Breast epithelium (tissue), 4 donors: ENCODE measurements at regions of chr5 and their contacts with region 1.

Region 1: DNA sequence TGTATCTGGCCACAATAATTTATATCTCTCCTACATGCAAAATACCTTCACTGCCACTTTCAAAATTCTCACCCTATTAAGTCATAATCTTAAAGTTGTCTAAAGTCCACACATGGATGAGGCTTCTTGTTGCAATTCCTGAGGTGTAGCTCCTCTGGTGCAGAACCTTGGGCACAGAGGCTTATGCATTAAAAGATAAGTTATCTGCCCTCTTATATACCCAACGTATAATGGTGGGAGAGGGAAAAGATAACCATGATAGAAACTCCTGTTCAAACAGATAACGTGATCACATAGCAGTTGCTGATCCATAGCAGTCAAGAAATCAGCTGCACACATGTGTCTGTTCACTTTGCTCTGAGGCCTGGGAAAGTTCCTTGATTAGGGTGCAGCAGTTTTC is 1767.0 kb downstream of the MAT2B start:
- DNase-seq: no peak
- H3K4me3 ChIP-seq: no peak overlapping the region
- H3K27ac ChIP-seq: no peak overlapping the region
- H3K4me1 ChIP-seq: no peaks in the 10 kb centered on the region
- H3K27me3 ChIP-seq: no peaks in the 10 kb centered on the region
- CTCF ChIP-seq: no peak
- POLR2A ChIP-seq: no peak

Region 2: DNA sequence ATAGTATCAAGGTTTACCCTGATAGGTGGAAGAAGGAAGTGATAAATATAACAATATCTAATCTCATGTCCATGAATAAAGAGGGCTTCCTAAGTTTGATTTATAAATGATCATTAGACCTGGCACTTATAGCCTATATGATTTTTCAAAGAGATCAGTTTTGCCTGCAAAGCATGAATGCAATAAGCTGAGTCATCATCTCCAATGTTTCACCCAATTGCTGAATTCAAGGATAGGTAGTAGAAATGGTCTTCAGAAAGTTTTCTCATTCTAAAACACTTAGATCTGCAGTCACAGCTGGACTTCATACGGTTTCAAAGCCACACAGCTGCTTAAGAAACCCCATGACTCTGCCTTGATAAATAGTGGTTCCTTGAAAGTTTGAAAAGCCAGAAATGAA is 44.3 kb before region 1 on chr5:
- intact Hi-C with region 1: loop called (anchors 2 kb)
- DNase-seq: no peak
- H3K4me3 ChIP-seq: no peak overlapping the region
- H3K27ac ChIP-seq: no peak overlapping the region
- H3K4me1 ChIP-seq: no peaks in the 10 kb centered on the region
- H3K27me3 ChIP-seq: no peaks in the 10 kb centered on the region
- CTCF ChIP-seq: no peak
- POLR2A ChIP-seq: no peak